Left lung (tissue), 14 donors: ENCODE measurements at regions of chr4 and their contacts with region 1.

Region 1: GRCh38 chr4:89024051-89024675 is 32.8 kb downstream of the FAM13A start:
- DNase-seq: peak in 2 of 4 donors; percentile 71 to 84
- ATAC-seq: peak; percentile 99
- H3K4me3 ChIP-seq: no peak overlapping the region
- H3K27ac ChIP-seq: no peak overlapping the region
- H3K4me1 ChIP-seq: peaks cover 0 to 7% of the 10 kb centered on the region in 2 donors
- H3K27me3 ChIP-seq: no peaks in the 10 kb centered on the region
- CTCF ChIP-seq: peak; percentile 82 to 85

Region 2: DNA sequence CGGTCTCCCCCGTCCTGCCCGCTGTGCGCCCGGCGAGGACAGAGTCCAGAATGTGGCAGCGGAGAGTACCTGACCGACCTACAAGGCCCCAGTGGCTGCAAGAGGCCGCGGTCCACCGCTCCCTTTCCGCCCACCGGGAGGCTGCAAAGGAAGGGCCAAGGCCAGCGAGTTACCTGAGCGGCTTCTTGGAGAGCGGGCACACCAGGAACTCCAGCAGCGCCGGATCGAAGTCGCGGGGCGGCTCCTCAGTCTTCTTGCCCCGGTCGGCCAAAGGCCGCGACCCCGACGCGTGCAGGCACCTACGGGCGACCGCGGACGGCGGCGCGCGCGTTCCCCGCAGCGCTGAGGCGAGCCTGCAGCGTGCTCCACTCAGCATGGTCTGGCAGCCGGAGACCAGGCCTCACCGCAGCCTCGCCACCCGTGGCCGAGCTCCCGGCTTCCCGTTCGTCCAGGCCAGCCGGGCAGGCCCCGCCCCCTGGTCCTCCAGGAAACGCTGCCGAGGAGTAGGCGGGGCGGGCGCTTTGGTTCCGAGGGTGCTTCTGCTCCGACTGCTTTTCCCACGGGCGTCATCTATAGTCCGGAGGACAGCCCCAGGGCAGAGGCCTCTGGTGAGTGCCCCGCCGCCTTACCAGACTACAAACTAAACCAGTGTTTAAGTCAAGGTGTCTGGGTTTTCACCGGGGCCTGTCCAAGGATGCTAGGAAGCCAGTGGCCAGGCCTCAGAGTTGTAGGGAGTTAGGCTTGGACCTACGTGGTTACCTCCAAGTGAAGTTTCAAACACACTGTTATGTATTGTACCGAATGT is 500.6 kb before region 1 on chr4 and contains the start of gene PYURF:
- intact Hi-C with region 1: loop called in 1 of 2 experiments (anchors 10 kb)
- DNase-seq: peak; percentile 89 to 99 (median 95)
- ATAC-seq: peak; percentile 99
- H3K4me3 ChIP-seq: peak within 1 kb of the TSS; percentile 79 to 91
- H3K27ac ChIP-seq: peak within 1 kb of the TSS; percentile 76 to 85
- H3K4me1 ChIP-seq: peaks cover 5 to 28% of the 10 kb centered on the region in 2 donors
- H3K27me3 ChIP-seq: no peaks in the 10 kb centered on the region
- CTCF ChIP-seq: no peak
- polyA plus RNA-seq, gene PYURF: 103 to 120 (median 110) TPM

Region 3: DNA sequence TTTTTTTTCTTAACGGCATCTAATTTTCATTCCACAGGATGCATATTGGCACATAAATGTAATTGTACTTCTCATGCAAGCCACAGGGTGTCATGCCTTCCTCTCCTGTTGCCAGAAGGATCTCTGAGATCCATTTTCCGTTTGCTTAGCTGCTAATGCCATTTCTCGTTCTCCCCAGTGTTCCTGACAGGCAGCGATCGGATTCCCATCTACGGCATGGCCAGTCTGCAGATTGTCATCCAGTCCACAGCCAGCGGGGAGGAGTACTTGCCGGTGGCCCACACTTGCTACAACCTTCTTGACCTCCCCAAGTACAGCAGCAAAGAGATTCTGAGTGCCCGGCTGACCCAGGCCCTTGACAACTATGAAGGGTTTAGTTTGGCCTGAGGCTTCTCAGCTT is 317.6 kb before region 1 on chr4:
- intact Hi-C with region 1: loop called in 1 of 2 experiments (anchors 10 kb)
- DNase-seq: peak in 1 of 4 donors; percentile 75
- ATAC-seq: peak; percentile 92
- H3K4me3 ChIP-seq: no peak overlapping the region
- H3K27ac ChIP-seq: no peak overlapping the region
- H3K4me1 ChIP-seq: no peaks in the 10 kb centered on the region
- H3K27me3 ChIP-seq: no peaks in the 10 kb centered on the region
- CTCF ChIP-seq: peak in 1 of 2 donors; percentile 34

Region 4: DNA sequence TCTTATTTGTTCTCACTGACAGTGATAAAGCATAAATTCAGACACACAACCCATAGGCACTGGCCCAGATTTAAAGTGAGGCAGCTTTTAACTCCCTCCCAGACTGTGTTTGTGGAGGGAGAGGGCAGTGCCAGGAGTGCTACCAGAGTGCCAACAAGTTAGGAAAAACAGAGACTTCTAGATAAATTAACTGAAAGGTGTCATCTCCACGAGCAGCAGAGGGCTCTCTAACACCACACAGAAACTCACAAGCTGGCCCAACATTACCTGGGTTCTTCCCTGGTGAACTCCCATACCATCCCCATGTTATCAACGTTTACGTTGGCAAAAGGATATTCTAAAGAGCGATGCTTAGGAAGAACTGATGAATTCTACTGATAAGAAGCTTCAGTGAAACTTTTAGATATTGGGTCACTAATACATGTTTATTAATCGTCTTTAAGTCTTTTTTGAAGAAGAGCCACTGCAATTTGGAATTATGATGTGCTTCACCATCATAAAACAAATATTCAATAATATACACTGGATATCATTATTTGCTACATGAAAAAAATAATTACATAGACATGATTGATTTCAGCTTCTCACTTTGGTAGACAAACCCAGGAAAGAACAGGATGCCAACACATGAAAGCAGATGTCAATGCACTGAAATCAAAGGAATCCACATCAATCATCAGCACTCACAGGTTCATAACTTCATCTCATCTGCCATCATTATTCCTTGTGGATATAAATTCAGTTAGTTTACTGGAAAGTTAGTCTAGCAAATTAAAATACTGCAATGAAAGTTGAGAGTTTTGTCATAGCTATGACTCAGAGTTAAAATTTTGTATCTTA is 205.3 kb before region 1 on chr4:
- intact Hi-C with region 1: loop called in 1 of 2 experiments (anchors 5 kb)
- DNase-seq: peak in 1 of 4 donors; percentile 39
- ATAC-seq: peak; percentile 15
- H3K4me3 ChIP-seq: no peak overlapping the region
- H3K27ac ChIP-seq: no peak overlapping the region
- H3K4me1 ChIP-seq: peaks cover 15 to 71% of the 10 kb centered on the region in 2 donors
- H3K27me3 ChIP-seq: no peaks in the 10 kb centered on the region
- CTCF ChIP-seq: peak in 1 of 2 donors; percentile 49

Region 5: GRCh38 chr4:88866862-88867550 is 157.2 kb before region 1 on chr4:
- intact Hi-C with region 1: no loop called
- DNase-seq: no peak
- ATAC-seq: no peak
- H3K4me3 ChIP-seq: no peak overlapping the region
- H3K27ac ChIP-seq: no peak overlapping the region
- H3K4me1 ChIP-seq: no peaks in the 10 kb centered on the region
- H3K27me3 ChIP-seq: no peaks in the 10 kb centered on the region
- CTCF ChIP-seq: no peak

Region 6: DNA sequence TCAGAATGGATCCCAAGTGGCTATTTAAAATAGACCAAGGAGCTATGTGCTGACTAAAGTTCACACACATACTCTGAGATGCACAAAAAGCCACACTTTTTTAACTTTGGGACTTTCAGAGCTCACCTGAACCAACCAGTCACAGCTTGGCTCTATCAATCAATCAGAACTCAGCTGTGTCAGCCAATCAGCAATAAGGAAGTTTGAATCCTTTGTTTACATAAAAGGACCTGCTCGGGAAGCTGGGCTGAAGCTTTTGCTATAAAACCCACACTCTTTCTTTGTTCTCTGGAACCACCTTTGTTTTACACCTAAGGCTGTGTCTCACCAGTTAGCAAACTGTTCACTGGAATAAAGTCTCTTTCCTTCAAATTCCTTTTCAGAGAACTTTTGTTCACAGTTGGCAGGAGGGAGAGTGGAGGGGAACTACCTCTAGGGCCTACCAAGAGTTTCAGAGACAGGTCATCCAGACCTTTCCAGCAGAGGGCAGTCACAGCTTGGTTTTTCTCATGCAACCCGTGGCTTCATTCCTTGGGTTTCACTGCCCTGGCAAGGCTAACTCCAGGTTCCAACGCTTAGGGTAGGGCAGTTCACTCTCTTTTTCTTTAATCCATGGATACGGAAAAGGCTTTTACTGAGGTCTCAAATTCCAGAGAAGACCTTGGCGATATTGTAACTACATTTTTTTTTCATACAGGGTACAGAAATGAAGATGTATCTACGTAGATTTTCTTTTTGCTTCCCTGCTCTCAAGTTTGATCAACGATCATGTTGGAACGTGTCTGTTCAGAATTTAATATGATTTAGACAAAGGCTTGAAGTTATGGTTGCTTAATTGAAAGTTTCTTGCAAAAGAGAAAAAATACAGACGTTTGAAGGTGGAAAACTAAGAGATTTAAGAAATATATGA is 202.8 kb after region 1 on chr4:
- intact Hi-C with region 1: no loop called
- DNase-seq: peak in 3 of 4 donors; percentile 60 to 81 (median 76)
- ATAC-seq: peak; percentile 100
- H3K4me3 ChIP-seq: no peak overlapping the region
- H3K27ac ChIP-seq: no peak overlapping the region
- H3K4me1 ChIP-seq: no peaks in the 10 kb centered on the region
- H3K27me3 ChIP-seq: no peaks in the 10 kb centered on the region
- CTCF ChIP-seq: peak; percentile 72 to 75